Stomach (tissue), 19 donors: ENCODE measurements at regions of chr14 and their contacts with region 1.

Region 1: GRCh38 chr14:52825085-52825484 is 33.7 kb upstream of the GNPNAT1 start:
- DNase-seq: no peak
- H3K4me3 ChIP-seq: no peak overlapping the region
- H3K27ac ChIP-seq: no peak overlapping the region
- H3K4me1 ChIP-seq: peaks cover 0 to 4% (median 0%) of the 10 kb centered on the region in 4 donors
- H3K27me3 ChIP-seq: no peaks in the 10 kb centered on the region
- CTCF ChIP-seq: no peak
- EP300 ChIP-seq: no peak
- POLR2A ChIP-seq: no peak

Region 2: GRCh38 chr14:52961060-52961639 is 136.1 kb after region 1 on chr14:
- intact Hi-C with region 1: loop called (anchors 5 kb)
- DNase-seq: peak; percentile 62 to 79
- H3K4me3 ChIP-seq: no peak overlapping the region
- H3K27ac ChIP-seq: peak overlapping the region in 3 of 5 donors; percentile 40 to 56 (median 52)
- H3K4me1 ChIP-seq: peaks cover 0 to 16% (median 12%) of the 10 kb centered on the region in 4 donors
- H3K27me3 ChIP-seq: no peaks in the 10 kb centered on the region
- CTCF ChIP-seq: peak in 5 of 7 experiments; percentile 36 to 80 (median 67)
- EP300 ChIP-seq: no peak
- POLR2A ChIP-seq: no peak